ENCODE measurements at regions of chr3 and their contacts with region 1.

Region 1: GRCh38 chr3:99499235-99500158 is 138.9 kb upstream of the COL8A1 start:
- DNase-seq: peak; percentile 16
- H3K4me3 Mint-ChIP-seq: no peak overlapping the region
- H3K27ac Mint-ChIP-seq: no peak overlapping the region
- H3K4me1 Mint-ChIP-seq: no peaks in the 10 kb centered on the region
- H3K27me3 Mint-ChIP-seq: no peaks in the 10 kb centered on the region

Region 2: GRCh38 chr3:98531622-98532274 is 967.7 kb before region 1 on chr3 and contains the start of gene GPR15:
- CTCF ChIA-PET with region 1: no interaction called
- intact Hi-C with region 1: no loop called
- DNase-seq: no peak
- H3K4me3 Mint-ChIP-seq: no peak within 1 kb of the TSS
- H3K27ac Mint-ChIP-seq: no peak within 1 kb of the TSS
- H3K4me1 Mint-ChIP-seq: peaks cover 5% of the 10 kb centered on the region
- H3K27me3 Mint-ChIP-seq: peaks cover 6% of the 10 kb centered on the region
- total RNA-seq, gene GPR15: 0.25 to 0.26 TPM

Region 3: DNA sequence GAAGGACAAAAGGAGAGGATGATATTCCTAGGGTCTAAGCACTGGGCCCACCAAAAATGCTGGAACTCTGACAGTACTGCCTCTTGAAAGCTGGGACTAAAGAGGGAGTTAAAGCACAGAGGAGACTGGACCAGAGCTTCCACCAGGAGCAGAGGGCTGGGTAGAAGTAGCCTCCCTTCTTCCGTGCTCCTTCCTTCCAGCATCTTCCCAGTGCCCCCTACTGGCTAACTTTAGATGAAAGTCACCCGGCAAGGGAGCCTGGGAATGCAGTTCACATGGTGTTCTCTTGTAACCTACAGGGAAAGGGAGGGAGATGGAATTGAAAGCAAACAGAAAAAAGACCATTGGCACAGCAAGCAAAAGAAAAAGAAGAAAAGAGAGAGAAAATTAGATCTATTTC is 32.7 kb after region 1 on chr3:
- CTCF ChIA-PET with region 1: no interaction called
- intact Hi-C with region 1: loop called (anchors 1 kb)
- DNase-seq: peak; percentile 27
- H3K4me3 Mint-ChIP-seq: no peak overlapping the region
- H3K27ac Mint-ChIP-seq: no peak overlapping the region
- H3K4me1 Mint-ChIP-seq: no peaks in the 10 kb centered on the region
- H3K27me3 Mint-ChIP-seq: peaks cover 3% of the 10 kb centered on the region

Measured in activated naive CD4-positive, alpha-beta T cell treated with anti-CD3 and anti-CD28 coated beads for 36 hours (primary cell).